CD8-positive, alpha-beta memory T cell (primary cell): ENCODE measurements at regions of chr14 and their contacts with region 1.

Region 1: GRCh38 chr14:105065280-105066228 is at the start of gene GPR132:
- DNase-seq: peak; percentile 82 to 97 (median 96)
- H3K4me3 ChIP-seq: peak within 1 kb of the TSS; percentile 99
- H3K4me3 Mint-ChIP-seq: peak within 1 kb of the TSS; percentile 88 to 100 (median 94)
- H3K27ac ChIP-seq: peak within 1 kb of the TSS; percentile 89
- H3K27ac Mint-ChIP-seq: peak within 1 kb of the TSS; percentile 94 to 100 (median 98)
- H3K4me1 ChIP-seq: peaks cover 86% of the 10 kb centered on the region
- H3K4me1 Mint-ChIP-seq: peaks cover 63 to 91% (median 69%) of the 10 kb centered on the region in 3 donors
- H3K27me3 ChIP-seq: no peaks in the 10 kb centered on the region
- H3K27me3 Mint-ChIP-seq: peaks cover 0 to 2% of the 10 kb centered on the region in 2 donors
- total RNA-seq, gene GPR132: 51.3 to 52.0 TPM

Region 2: DNA sequence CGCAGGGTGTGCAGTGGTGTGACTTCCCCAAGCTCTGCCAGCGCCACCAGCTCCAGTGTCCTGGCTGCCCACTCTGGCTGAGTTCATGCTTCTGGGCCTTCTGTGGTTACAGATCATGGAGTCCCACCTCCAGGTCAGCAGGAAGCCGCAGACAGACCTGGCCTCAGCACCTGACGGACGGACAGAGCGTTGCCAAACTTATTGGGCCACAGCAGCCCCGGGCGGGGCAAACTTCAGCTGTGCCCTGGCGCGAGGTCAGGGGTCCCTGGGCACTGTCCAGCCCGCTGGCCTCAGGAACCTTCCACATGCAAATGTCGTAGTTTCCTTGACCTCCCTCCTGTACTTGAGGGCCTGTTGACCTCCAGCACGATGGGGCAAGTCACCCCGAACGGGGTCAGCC is 11.6 kb before region 1 on chr14:
- CTCF ChIA-PET with region 1: interaction called, 106 read pairs
- POLR2A ChIA-PET with region 1: interaction called, 4 read pairs
- DNase-seq: no peak
- H3K4me3 ChIP-seq: no peak overlapping the region
- H3K4me3 Mint-ChIP-seq: no peak overlapping the region
- H3K27ac ChIP-seq: no peak overlapping the region
- H3K27ac Mint-ChIP-seq: peak overlapping the region in 5 of 8 donors; percentile 43 to 79 (median 69)
- H3K4me1 ChIP-seq: peaks cover 12% of the 10 kb centered on the region
- H3K4me1 Mint-ChIP-seq: peaks cover 7 to 38% (median 20%) of the 10 kb centered on the region in 3 donors
- H3K27me3 ChIP-seq: no peaks in the 10 kb centered on the region
- H3K27me3 Mint-ChIP-seq: no peaks in the 10 kb centered on the region

Region 3: DNA sequence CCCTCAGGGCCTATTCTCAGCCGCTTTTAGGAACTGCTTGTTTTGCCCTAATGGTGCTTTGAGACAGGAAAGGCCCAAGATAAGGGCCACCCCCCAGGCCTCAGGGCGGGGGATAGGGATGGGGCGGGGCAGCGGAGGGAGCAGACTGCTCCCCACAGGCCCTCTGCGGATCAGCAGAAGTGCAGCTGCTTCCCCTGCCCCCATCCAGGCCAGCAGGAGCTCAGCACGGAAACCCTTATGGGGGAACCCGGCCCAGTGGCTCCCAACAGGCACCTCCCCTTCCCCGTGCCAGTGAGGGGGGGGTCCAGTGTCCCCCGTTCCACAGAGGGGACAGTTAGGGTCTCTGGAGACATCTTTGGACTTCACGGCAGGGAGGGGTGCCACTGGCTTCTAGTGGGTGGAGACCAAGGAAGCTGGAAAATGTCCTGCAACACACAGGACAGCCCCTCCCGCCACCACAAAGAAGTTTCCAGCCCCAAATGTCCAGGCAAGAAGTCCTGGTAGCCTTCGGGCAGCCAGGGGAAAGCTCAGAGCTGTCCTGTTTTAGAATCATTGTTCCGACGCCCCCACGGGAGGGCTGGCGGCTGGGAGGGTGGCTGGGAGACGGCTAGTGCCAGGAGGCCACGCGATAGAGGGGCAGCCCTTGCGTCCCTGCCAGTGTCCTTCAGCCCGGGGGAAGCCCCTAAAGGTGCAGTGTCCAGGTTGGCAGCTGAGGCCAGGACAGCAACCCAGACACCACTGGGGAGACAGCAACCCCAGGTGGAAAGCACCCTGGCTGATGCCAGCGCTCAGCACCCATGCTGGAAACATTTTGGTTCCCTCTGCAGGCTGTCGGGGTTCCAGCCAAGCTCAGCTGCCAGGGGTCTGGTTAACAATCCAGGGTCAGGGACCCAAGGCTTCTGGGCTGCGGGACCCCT is 10.1 kb after region 1 on chr14:
- CTCF ChIA-PET with region 1: interaction called, 10 read pairs
- POLR2A ChIA-PET with region 1: interaction called, 20 read pairs
- DNase-seq: no peak
- H3K4me3 ChIP-seq: no peak overlapping the region
- H3K4me3 Mint-ChIP-seq: peak overlapping the region in 2 of 7 donors; percentile 25 to 68
- H3K27ac ChIP-seq: peak overlapping the region; percentile 9
- H3K27ac Mint-ChIP-seq: peak overlapping the region in 2 of 8 donors; percentile 12 to 61
- H3K4me1 ChIP-seq: peaks cover 32% of the 10 kb centered on the region
- H3K4me1 Mint-ChIP-seq: peaks cover 27 to 56% (median 34%) of the 10 kb centered on the region in 3 donors
- H3K27me3 ChIP-seq: no peaks in the 10 kb centered on the region
- H3K27me3 Mint-ChIP-seq: no peaks in the 10 kb centered on the region